ENCODE measurements at regions of chr7 and their contacts with region 1.

Region 1: GRCh38 chr7:44622307-44623151 is 16.1 kb downstream of the OGDH start:
- DNase-seq: peak; percentile 69
- H3K4me3 Mint-ChIP-seq: peak overlapping the region; percentile 39
- H3K27ac Mint-ChIP-seq: peak overlapping the region; percentile 76
- H3K4me1 Mint-ChIP-seq: peaks cover 72% of the 10 kb centered on the region
- H3K27me3 Mint-ChIP-seq: no peaks in the 10 kb centered on the region

Region 2: GRCh38 chr7:44163591-44163990 is 458.9 kb before region 1 on chr7:
- CTCF ChIA-PET with region 1: no interaction called
- intact Hi-C with region 1: no loop called
- DNase-seq: no peak
- H3K4me3 Mint-ChIP-seq: no peak overlapping the region
- H3K27ac Mint-ChIP-seq: no peak overlapping the region
- H3K4me1 Mint-ChIP-seq: peaks cover 6% of the 10 kb centered on the region
- H3K27me3 Mint-ChIP-seq: no peaks in the 10 kb centered on the region

Region 3: DNA sequence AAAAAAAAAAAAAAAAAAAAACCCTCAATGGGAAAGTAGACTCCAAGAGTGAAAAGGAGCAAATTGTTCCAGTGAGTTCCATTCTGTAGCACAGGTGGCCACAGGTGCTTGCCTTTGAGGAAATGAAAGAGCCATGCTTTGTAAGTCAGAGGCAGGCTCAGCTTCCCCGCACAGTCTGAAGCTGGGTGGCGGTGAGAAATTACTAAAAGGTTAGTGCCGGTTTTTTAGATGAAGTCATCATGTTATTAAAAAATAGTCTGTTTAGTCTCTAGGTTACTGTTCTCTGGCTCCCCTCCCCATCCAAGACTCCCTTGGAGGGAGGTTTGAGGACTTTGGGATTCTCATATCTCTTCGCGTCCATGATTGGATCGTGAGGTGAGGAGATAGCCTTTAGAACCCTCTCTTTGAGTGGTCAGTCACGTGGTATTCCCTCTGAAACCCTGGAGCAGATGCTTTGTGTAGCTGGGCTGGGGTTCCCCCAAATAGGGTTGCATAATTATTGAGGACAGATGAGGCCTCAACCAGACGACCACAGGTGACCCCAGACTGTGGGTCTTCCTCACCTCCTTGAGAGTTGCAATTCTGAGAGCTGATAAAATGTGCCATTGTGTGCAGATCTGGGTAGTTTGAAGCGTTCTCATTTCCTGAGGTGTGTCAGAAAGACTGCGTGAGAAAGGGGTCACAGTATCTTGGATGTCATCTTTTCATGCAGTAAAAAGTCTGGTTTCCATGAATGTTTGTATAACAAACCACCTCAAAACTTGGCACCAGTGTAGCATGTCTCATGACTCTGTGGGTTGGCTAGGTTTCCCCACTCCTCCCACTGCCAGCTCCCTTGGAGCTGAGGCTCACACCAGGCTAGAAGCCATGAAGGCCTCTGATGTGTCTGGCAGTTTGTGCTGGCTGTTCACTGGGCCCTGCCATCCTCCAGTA is 11.0 kb after region 1 on chr7:
- CTCF ChIA-PET with region 1: interaction called, 52 read pairs
- intact Hi-C with region 1: loop called (anchors 1 kb)
- DNase-seq: peak; percentile 63
- H3K4me3 Mint-ChIP-seq: no peak overlapping the region
- H3K27ac Mint-ChIP-seq: peak overlapping the region; percentile 80
- H3K4me1 Mint-ChIP-seq: peaks cover 77% of the 10 kb centered on the region
- H3K27me3 Mint-ChIP-seq: no peaks in the 10 kb centered on the region

Measured in activated naive CD4-positive, alpha-beta T cell treated with anti-CD3 and anti-CD28 coated beads for 36 hours (primary cell).